Ascending aorta (tissue), 2 donors: ENCODE measurements at regions of chr6 and their contacts with region 1.

Region 1: GRCh38 chr6:132512638-132513632 is at the start of gene STX7:
- DNase-seq: peak; percentile 74 to 93
- H3K4me3 ChIP-seq: peak within 1 kb of the TSS; percentile 69 to 83
- H3K27ac ChIP-seq: peak within 1 kb of the TSS; percentile 74 to 88
- H3K4me1 ChIP-seq: peaks cover 10 to 31% of the 10 kb centered on the region in 2 donors
- H3K27me3 ChIP-seq: no peaks in the 10 kb centered on the region
- CTCF ChIP-seq: no peak
- total RNA-seq, gene STX7: 18.3 TPM

Region 2: GRCh38 chr6:132304891-132305305 is 208.0 kb before region 1 on chr6:
- intact Hi-C with region 1: no loop called
- DNase-seq: no peak
- H3K4me3 ChIP-seq: no peak overlapping the region
- H3K27ac ChIP-seq: no peak overlapping the region
- H3K4me1 ChIP-seq: no peaks in the 10 kb centered on the region
- H3K27me3 ChIP-seq: no peaks in the 10 kb centered on the region
- CTCF ChIP-seq: no peak

Region 3: DNA sequence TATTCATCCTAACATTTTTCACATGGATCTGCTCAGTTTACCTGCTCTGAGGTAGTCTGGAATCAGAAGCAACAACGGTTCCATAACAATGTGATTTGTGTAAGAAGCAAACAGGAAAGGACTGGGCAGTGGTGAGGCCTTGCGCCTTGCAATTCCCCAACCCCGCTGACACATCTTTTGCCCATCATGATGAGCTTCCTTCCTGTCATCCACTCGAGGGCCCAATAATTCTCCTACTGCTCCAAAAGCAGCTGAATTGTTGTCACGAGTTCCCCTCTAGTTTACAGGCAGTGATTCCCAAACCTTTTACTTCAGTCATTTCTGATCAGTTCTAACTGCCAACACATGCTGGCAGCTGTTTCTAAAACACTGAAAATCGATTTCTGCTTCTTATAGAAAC is 22.9 kb before region 1 on chr6:
- intact Hi-C with region 1: loop called (anchors 2 kb)
- DNase-seq: peak in 1 of 2 donors; percentile 74
- H3K4me3 ChIP-seq: peak overlapping the region in 1 of 2 donors; percentile 43
- H3K27ac ChIP-seq: peak overlapping the region; percentile 70 to 77
- H3K4me1 ChIP-seq: peaks cover 8 to 28% of the 10 kb centered on the region in 2 donors
- H3K27me3 ChIP-seq: no peaks in the 10 kb centered on the region
- CTCF ChIP-seq: no peak

Region 4: GRCh38 chr6:132614554-132614953 is 101.6 kb after region 1 on chr6:
- intact Hi-C with region 1: no loop called
- DNase-seq: no peak
- H3K4me3 ChIP-seq: no peak overlapping the region
- H3K27ac ChIP-seq: no peak overlapping the region
- H3K4me1 ChIP-seq: no peaks in the 10 kb centered on the region
- H3K27me3 ChIP-seq: no peaks in the 10 kb centered on the region
- CTCF ChIP-seq: no peak

Region 5: DNA sequence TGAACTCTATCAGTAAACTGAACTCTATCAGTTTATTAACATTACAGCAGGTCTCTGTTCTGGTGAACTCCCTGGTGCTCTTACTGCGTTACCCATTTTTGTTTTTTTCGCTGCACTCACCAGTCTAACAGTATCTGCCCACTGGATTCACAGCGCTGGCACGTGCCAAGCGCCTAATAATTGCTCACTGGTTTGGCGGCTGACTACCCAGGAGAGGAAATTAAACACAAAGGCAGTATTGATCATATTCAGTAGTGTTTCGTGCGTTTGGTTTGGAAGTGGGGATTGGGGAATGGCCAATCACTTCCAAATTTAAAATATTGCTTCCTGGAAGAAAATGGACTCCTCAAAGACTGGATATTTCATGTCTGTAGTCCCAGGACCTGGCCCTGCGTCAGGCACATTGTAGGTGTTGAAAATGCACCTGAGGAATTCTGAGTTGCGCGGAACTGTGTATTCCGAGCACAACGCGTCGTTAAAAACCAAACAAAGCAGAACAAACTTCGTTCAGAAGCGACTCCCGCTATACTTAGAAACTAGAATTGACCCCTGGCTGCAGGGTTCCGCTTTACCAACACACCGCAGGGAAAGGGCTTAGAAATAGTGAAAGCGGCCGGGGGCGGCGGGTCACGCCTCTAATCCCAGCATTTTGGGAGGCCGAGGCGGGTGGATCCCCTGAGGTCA is 300.4 kb after region 1 on chr6:
- intact Hi-C with region 1: loop called (anchors 10 kb)
- DNase-seq: peak in 1 of 2 donors; percentile 74
- H3K4me3 ChIP-seq: peak overlapping the region; percentile 60 to 76
- H3K27ac ChIP-seq: peak overlapping the region; percentile 54 to 56
- H3K4me1 ChIP-seq: peaks cover 10 to 20% of the 10 kb centered on the region in 2 donors
- H3K27me3 ChIP-seq: no peaks in the 10 kb centered on the region
- CTCF ChIP-seq: no peak

Region 6: DNA sequence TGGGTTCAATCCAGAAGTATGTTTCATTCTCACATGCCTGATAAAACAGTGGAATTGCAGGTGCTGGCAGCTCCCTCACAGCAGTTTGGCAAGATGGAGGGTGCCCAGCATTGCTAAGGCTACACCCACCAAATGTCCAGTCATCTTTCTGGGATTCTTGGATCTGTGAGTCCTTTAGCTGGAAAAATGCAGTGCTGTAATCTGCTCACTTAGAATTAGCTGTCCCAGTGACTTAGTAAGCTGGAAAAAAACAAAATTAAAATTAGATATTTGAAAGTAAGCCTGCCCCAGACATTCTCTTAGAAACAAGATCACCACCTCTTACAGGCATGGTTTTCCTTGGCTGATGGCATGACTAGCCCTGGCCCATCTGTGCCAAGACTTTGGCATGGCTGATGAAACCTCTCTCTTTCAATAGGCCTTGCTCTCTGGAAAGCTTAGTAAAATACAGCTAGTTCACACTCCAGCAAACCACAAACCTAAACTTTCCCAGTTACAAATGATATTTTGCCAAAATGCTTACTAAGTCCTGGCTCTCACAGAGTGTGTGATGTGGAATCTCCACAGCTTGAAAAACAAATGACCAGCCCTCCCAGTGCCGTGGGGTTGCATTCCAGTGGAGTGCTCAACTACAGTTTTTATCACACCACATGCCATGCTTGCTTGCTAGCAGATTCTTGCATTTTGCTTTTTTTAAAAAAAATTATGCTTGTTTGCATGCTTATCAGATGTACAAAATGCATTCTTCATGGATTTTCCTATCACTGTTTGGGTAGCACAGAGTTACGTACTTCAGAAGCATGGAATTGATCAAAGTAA is 989.7 kb after region 1 on chr6:
- intact Hi-C with region 1: loop called (anchors 10 kb)
- DNase-seq: peak in 1 of 2 donors; percentile 87
- H3K4me3 ChIP-seq: no peak overlapping the region
- H3K27ac ChIP-seq: peak overlapping the region; percentile 71 to 74
- H3K4me1 ChIP-seq: peaks cover 0 to 25% of the 10 kb centered on the region in 2 donors
- H3K27me3 ChIP-seq: no peaks in the 10 kb centered on the region
- CTCF ChIP-seq: no peak